Uterus (tissue), 4 donors: ENCODE measurements at regions of chr12 and their contacts with region 1.

Region 1: GRCh38 chr12:50986966-50987737 is 34.8 kb downstream of the HIGD1C start:
- DNase-seq: peak; percentile 34 to 66
- H3K4me3 ChIP-seq: no peak overlapping the region
- H3K27ac ChIP-seq: peak overlapping the region; percentile 5 to 81
- H3K4me1 ChIP-seq: no peaks in the 10 kb centered on the region
- H3K27me3 ChIP-seq: no peaks in the 10 kb centered on the region
- CTCF ChIP-seq: peak; percentile 53 to 78 (median 72)
- POLR2A ChIP-seq: no peak

Region 2: DNA sequence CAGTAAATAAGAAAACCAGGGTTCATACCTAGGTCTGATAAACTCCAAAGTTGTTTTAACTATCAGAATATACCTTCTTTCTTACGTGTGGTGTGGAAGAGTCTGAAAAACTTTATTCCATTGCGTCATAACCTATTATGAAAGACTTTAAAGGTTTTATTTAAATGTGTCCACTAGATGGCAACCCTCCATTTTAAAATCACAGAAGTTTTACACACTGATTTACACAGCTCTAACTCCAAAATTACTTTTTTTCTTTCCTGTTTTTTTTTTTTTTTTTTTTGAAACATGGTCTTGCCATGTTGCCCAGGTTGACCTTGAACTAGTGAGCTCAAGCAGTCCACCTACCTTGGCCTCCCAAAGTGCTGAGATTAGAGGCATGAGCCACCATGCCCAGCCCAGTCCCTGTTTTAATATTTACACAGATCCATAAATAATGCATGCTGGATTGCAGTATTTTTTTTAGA is 161.7 kb before region 1 on chr12:
- intact Hi-C with region 1: loop called (anchors 2 kb)
- DNase-seq: no peak
- H3K4me3 ChIP-seq: no peak overlapping the region
- H3K27ac ChIP-seq: peak overlapping the region; percentile 65 to 71
- H3K4me1 ChIP-seq: no peaks in the 10 kb centered on the region
- H3K27me3 ChIP-seq: no peaks in the 10 kb centered on the region
- CTCF ChIP-seq: peak; percentile 43 to 76 (median 64)
- POLR2A ChIP-seq: no peak